ENCODE measurements at regions of chr22 and their contacts with region 1.

Region 1: GRCh38 chr22:42959576-42960509 is 55.1 kb downstream of the PACSIN2 start:
- DNase-seq: peak; percentile 63 to 72 (median 67)
- ATAC-seq: peak; percentile 80 to 94 (median 93)
- H3K4me3 ChIP-seq: peak overlapping the region; percentile 15 to 63 (median 48)
- H3K27ac ChIP-seq: peak overlapping the region; percentile 11 to 82 (median 65)
- H3K4me1 ChIP-seq: peaks cover 11 to 85% (median 43%) of the 10 kb centered on the region in 12 donors
- H3K27me3 ChIP-seq: no peaks in the 10 kb centered on the region
- CTCF ChIP-seq: no peak
- POLR2A ChIP-seq: peak in 1 of 2 donors; percentile 31

Region 2: GRCh38 chr22:42856865-42857704 is 102.8 kb before region 1 on chr22 and contains the start of gene ARFGAP3:
- intact Hi-C with region 1: loop called in 2 of 10 experiments (anchors 5 to 10 kb)
- DNase-seq: peak; percentile 94 to 98 (median 96)
- ATAC-seq: peak; percentile 90 to 98 (median 96)
- H3K4me3 ChIP-seq: peak within 1 kb of the TSS; percentile 72 to 95 (median 90)
- H3K27ac ChIP-seq: peak within 1 kb of the TSS; percentile 87 to 98 (median 98)
- H3K4me1 ChIP-seq: peaks cover 0 to 35% (median 18%) of the 10 kb centered on the region in 12 donors
- H3K27me3 ChIP-seq: no peaks in the 10 kb centered on the region
- CTCF ChIP-seq: no peak
- POLR2A ChIP-seq: peak; percentile 27 to 92
- total RNA-seq, gene ARFGAP3: 15.4 to 30.9 (median 25.1) TPM

Region 3: DNA sequence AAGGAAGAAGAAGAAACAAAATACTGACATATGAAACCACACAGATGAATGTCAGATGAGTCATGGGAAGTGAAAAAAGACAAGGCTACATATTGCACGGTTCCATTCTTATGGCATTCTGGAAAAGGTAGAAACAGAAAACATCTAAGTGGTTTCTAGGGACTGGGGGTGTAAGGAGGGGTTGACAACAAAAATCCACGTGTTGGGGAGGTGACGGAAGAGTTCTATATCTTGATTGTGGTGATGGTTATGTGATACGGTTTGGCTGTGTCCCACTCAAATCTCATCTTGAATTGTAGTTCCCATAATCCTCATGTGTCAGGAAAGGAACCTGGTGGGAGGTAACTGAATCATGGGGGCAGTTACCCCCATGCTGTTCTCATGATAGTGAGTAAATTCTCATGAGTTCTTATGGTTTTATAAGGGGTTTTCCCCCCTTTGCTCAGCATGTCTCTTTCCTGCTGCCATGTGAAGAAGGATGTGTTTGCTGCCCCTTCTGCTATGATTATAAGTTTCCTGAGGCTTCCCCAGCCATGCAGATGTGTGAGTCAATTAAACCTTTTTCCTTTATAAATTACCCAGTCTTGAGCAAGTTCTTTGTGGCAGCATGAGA is 96.4 kb before region 1 on chr22:
- intact Hi-C with region 1: loop called in 4 of 10 experiments (anchors 5 to 10 kb)
- DNase-seq: no peak
- ATAC-seq: no peak
- H3K4me3 ChIP-seq: no peak overlapping the region
- H3K27ac ChIP-seq: no peak overlapping the region
- H3K4me1 ChIP-seq: peaks cover 0 to 18% (median 4%) of the 10 kb centered on the region in 12 donors
- H3K27me3 ChIP-seq: no peaks in the 10 kb centered on the region
- CTCF ChIP-seq: no peak
- POLR2A ChIP-seq: no peak

Region 4: GRCh38 chr22:42880815-42881214 is 79.0 kb before region 1 on chr22:
- intact Hi-C with region 1: loop called in 2 of 10 experiments (anchors 5 to 10 kb)
- DNase-seq: no peak
- ATAC-seq: no peak
- H3K4me3 ChIP-seq: no peak overlapping the region
- H3K27ac ChIP-seq: no peak overlapping the region
- H3K4me1 ChIP-seq: peaks cover 0 to 41% (median 2%) of the 10 kb centered on the region in 12 donors
- H3K27me3 ChIP-seq: no peaks in the 10 kb centered on the region
- CTCF ChIP-seq: peak in 1 of 12 donors; percentile 17
- POLR2A ChIP-seq: no peak

Region 5: GRCh38 chr22:42901790-42902508 is 57.9 kb before region 1 on chr22:
- intact Hi-C with region 1: loop called in 2 of 10 experiments (anchors 5 kb)
- DNase-seq: peak in 4 of 5 donors; percentile 63 to 86 (median 79)
- ATAC-seq: peak; percentile 67 to 86 (median 84)
- H3K4me3 ChIP-seq: no peak overlapping the region
- H3K27ac ChIP-seq: peak overlapping the region in 11 of 12 donors; percentile 50 to 87 (median 67)
- H3K4me1 ChIP-seq: peaks cover 7 to 82% (median 63%) of the 10 kb centered on the region in 12 donors
- H3K27me3 ChIP-seq: no peaks in the 10 kb centered on the region
- CTCF ChIP-seq: peak in 5 of 12 donors; percentile 5 to 28 (median 15)
- POLR2A ChIP-seq: no peak

Region 6: GRCh38 chr22:43014869-43015676 is 55.2 kb after region 1 on chr22 and contains the start of gene PACSIN2:
- intact Hi-C with region 1: loop called in 2 of 10 experiments (anchors 5 to 10 kb)
- DNase-seq: peak; percentile 100
- ATAC-seq: peak; percentile 99 to 100 (median 100)
- H3K4me3 ChIP-seq: peak within 1 kb of the TSS; percentile 65 to 97 (median 79)
- H3K27ac ChIP-seq: peak within 1 kb of the TSS; percentile 26 to 82 (median 68)
- H3K4me1 ChIP-seq: peaks cover 0 to 37% (median 11%) of the 10 kb centered on the region in 12 donors
- H3K27me3 ChIP-seq: no peaks in the 10 kb centered on the region
- CTCF ChIP-seq: no peak
- POLR2A ChIP-seq: peak; percentile 79 to 97
- total RNA-seq, gene PACSIN2: 42.5 to 87.1 (median 59.3) TPM

Region 7: GRCh38 chr22:43077121-43077877 is 117.5 kb after region 1 on chr22:
- intact Hi-C with region 1: no loop called
- DNase-seq: peak in 4 of 5 donors; percentile 51 to 69 (median 55)
- ATAC-seq: peak; percentile 79 to 90 (median 86)
- H3K4me3 ChIP-seq: no peak overlapping the region
- H3K27ac ChIP-seq: peak overlapping the region in 4 of 12 donors; percentile 15 to 45 (median 36)
- H3K4me1 ChIP-seq: peaks cover 0 to 11% (median 0%) of the 10 kb centered on the region in 12 donors
- H3K27me3 ChIP-seq: no peaks in the 10 kb centered on the region
- CTCF ChIP-seq: no peak
- POLR2A ChIP-seq: no peak

Measured in heart left ventricle (tissue), 16 donors.